Sciatic nerve (tissue), 2 donors: ENCODE measurements at regions of chrX and their contacts with region 1.

Region 1: DNA sequence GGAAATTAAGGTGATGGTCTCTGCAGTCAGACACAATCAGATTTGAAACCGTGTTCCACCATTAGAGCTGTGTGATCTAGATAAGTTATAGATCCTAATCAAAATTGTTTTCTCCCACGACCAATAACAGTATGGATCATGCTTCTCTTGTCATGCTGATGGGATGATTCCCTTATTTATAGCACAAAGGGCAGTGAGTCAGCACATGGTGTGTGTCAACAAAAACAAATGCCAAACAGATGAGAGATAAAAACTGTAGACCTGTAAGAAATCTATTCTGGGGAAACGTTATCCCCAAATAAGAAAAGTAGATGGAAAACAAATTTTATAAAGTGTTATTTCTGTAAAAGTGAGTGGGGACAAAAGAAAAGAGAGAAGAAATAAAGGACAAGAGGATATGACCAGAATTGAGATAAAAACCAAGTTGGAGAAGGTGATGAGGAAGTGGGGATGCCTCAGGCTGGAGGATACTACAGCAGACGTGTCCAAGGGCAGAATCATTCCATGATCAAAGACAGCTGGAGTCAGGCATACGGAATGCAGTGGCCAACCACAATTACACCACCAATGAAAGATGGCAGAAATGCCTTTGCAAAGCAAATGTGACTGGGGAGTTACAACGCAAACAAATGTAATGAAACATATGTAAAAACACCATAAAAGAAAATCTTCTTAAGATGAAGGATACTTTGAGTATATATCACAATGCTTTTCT is 377.8 kb upstream of the PRKX start:
- DNase-seq: no peak
- ATAC-seq: no peak

Region 2: DNA sequence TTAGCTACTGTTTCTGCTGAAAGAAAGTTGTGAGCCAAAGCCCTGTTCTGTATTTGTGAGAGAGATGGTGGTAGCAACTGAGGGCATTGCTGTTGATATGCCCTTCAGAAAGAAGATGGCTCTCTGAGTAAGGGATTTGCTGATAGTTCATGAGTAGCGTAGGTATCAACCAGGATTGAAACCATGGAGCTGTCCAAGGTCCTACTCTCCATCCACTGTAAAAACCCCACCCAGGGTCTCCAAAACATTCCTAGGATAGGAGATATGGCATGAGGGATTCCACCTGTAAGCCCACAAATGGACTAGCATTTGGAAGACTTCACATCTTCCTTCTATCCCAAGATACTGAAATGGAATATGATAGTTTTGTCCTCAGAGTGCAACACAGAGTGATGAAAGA is 100.6 kb before region 1 on chrX:
- intact Hi-C with region 1: no loop called
- DNase-seq: no peak
- ATAC-seq: no peak

Region 3: DNA sequence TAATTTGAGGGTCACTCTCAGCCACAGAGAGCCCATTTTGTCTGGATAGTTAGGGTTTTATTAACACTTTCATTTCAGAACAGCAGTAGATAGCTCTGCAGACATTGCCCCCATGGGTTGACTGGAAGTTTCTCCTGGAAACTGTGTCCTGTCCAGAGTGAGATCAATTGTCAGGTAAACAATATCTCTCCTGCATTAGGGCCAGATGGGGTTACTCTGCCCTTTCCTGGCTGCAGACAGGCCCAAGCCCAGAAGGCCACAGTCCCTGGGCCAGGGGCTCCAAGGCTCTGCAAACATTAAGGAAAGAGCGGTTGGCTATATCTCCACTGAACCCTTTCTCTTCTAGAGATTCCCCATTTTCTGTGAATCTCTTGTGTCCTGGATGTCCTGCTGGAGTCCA is 59.1 kb after region 1 on chrX:
- intact Hi-C with region 1: no loop called
- DNase-seq: no peak
- ATAC-seq: no peak

Region 4: GRCh38 chrX:6019076-6019475 is 1927.9 kb after region 1 on chrX:
- intact Hi-C with region 1: loop called (anchors 5 kb)
- DNase-seq: no peak
- ATAC-seq: no peak